ENCODE measurements at regions of chr14 and their contacts with region 1.

Region 1: DNA sequence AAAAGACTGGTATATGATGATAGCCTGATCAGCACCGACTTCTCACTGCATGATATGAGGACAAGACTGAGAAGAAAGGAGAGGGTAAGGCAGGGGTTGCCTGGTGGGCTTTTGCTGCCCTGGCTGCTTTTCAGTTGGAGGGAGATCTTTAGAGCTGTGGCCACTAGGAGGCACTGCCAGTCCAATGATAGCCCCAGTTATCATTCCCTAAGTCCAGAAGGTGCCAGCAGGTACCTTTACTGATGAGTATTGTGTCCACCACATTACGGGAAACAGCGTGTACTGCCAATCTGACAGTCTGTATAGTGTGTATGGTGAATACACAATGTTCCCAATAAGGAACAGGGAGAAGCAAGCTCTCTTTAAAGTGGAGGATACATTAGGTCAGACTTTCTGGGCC is 55.8 kb upstream of the CCDC175 start:
- DNase-seq: peak; percentile 58
- H3K4me3 ChIP-seq: no peak overlapping the region
- H3K27ac ChIP-seq: no peak overlapping the region
- H3K4me1 ChIP-seq: peaks cover 6% of the 10 kb centered on the region
- H3K27me3 ChIP-seq: peaks cover 17% of the 10 kb centered on the region
- CTCF ChIP-seq: peak; percentile 75

Region 2: DNA sequence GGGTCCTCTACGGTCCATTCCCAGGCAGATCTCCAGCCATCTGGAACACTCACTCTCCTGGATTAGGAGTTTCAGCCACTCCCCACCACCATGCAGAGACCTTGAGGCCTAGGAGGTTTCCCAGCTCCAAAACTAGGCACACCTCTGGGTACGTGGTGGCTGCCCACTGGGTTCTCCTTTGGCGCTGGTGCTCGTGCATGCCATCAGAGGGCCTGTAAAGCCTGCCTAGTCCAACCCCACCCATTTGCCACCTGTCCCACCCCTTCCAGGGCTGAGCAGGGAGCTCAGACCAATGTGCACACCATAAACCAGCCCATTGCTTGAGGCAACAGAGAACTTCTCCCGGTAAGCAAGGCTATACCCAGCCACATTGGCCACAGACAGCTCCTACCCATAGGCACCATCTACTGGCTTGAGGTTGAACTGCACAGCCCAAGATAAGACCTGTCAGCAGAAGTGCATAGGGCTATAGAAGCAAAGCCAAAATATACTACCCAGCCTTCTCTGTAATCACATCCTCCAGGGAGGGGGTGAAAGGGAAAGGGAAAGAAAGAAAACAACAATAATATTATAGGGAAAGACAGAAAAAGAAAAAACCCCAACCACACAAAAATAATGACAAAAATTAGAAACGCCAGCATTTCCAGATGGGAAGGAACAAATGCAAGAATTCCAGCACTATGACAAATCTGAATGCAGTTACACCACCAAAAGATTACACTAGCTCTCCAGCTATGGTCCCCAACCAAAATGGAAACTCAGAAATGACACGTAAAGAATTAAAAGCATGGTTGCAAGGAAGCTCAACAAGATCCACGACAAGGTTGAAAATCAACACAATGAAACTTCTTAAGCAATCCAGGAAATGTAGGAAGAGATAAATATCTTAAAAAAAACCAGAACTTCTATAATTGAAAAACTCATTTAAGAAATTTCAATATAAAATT is 56.1 kb after region 1 on chr14:
- CTCF ChIA-PET with region 1: interaction called, 9 read pairs
- POLR2A ChIA-PET with region 1: no interaction called
- intact Hi-C with region 1: loop called (anchors 2 kb)
- DNase-seq: peak; percentile 85
- H3K4me3 ChIP-seq: no peak overlapping the region
- H3K27ac ChIP-seq: no peak overlapping the region
- H3K4me1 ChIP-seq: no peaks in the 10 kb centered on the region
- H3K27me3 ChIP-seq: no peaks in the 10 kb centered on the region
- CTCF ChIP-seq: peak; percentile 94

Region 3: GRCh38 chr14:59897761-59898383 is 265.5 kb after region 1 on chr14:
- CTCF ChIA-PET with region 1: interaction called, 15 read pairs
- POLR2A ChIA-PET with region 1: no interaction called
- intact Hi-C with region 1: loop called (anchors 5 kb)
- DNase-seq: peak; percentile 67
- H3K4me3 ChIP-seq: no peak overlapping the region
- H3K27ac ChIP-seq: no peak overlapping the region
- H3K4me1 ChIP-seq: no peaks in the 10 kb centered on the region
- H3K27me3 ChIP-seq: no peaks in the 10 kb centered on the region
- CTCF ChIP-seq: peak; percentile 63